OCI-LY7 (cell line): ENCODE measurements at regions of chr2 and their contacts with region 1.

Region 1: DNA sequence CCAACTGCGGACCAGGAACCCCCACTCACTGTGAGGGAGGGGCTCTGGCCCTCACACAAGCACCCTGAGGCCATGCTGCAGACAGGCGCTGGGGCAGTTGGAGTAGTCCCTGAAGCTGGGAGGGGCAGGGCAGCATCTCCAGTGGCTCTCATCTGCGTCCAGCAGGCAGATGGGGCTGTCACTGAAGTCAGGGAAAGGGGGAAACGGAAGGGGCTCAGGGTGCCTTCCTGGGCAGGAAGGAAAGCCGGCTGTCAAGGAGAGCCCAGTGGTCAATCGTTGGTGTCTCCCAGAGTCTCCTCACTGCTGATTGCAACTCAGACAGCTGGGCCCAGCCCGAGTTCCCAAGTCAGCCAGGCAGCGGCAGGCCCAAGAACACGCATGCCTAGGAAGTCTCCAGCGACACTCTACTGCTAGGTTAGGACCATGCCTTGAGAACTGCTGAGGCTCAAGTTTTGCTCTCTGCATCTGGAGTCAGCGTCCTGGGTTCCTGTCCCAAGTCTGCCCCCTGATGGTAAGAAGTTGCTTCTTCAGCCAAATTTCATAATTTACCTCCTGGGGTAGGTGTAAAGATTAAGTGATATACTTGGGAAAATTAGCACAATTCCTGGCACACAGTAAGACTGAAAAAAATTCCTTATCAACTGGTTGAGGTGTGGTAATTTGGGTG is 27.5 kb upstream of the NMUR1 start:
- DNase-seq: peak; percentile 88
- H3K4me3 ChIP-seq: no peak overlapping the region
- H3K27ac ChIP-seq: no peak overlapping the region
- H3K4me1 ChIP-seq: peaks cover 4% of the 10 kb centered on the region
- CTCF ChIP-seq: peak; percentile 91

Region 2: DNA sequence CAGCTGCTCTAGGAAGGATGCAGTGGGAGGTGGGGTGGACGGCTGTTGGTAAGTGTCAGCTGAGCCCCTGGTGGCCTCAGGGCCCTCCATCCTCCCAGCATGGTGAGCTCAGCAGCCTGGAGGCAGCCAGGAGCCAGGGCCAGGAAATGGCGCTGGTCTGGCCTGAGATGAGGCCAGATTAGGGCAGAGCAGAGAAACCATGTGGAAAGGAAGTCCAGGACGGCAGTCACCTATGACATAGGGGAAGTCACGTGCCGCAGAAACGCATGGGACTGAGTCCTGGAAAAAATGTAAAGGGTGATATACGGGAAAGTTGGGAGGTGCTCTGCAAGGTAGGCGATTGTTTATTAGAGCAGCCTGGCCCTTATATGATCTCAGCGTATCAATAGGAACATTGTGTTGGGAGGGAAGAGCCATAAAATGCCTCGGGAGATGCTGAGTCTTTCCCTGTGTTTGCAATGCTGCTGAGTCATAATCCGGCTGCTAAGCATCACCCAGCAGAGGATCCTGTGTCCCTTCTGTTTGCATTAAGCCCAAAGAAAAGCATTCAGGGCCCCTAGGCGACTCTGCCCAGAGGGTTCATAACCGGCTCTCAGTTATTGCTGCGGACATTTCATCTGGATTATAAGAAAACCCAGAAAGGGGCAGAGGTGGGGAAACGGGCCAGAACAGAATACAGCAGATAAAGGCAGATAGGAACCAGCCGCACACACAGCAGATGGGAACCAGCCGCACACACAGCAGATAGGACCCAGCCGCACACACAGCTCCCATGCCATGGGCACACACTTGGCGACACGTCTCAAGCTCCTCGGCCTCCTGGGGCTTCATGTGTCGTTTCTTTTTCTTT is 192.5 kb before region 1 on chr2:
- CTCF ChIA-PET with region 1: no interaction called
- POLR2A ChIA-PET with region 1: no interaction called
- intact Hi-C with region 1: no loop called
- DNase-seq: peak; percentile 13
- H3K4me3 ChIP-seq: no peak overlapping the region
- H3K27ac ChIP-seq: no peak overlapping the region
- H3K4me1 ChIP-seq: peaks cover 18% of the 10 kb centered on the region
- CTCF ChIP-seq: no peak

Region 3: GRCh38 chr2:231482806-231483391 is 74.8 kb before region 1 on chr2:
- CTCF ChIA-PET with region 1: no interaction called
- POLR2A ChIA-PET with region 1: no interaction called
- intact Hi-C with region 1: loop called (anchors 1 kb)
- DNase-seq: peak; percentile 60
- H3K4me3 ChIP-seq: no peak overlapping the region
- H3K27ac ChIP-seq: no peak overlapping the region
- H3K4me1 ChIP-seq: peaks cover 14% of the 10 kb centered on the region
- CTCF ChIP-seq: peak; percentile 84

Region 4: GRCh38 chr2:231494669-231495068 is 63.0 kb before region 1 on chr2:
- CTCF ChIA-PET with region 1: no interaction called
- POLR2A ChIA-PET with region 1: no interaction called
- intact Hi-C with region 1: no loop called
- DNase-seq: no peak
- H3K4me3 ChIP-seq: no peak overlapping the region
- H3K27ac ChIP-seq: no peak overlapping the region
- H3K4me1 ChIP-seq: no peaks in the 10 kb centered on the region
- CTCF ChIP-seq: no peak

Region 5: DNA sequence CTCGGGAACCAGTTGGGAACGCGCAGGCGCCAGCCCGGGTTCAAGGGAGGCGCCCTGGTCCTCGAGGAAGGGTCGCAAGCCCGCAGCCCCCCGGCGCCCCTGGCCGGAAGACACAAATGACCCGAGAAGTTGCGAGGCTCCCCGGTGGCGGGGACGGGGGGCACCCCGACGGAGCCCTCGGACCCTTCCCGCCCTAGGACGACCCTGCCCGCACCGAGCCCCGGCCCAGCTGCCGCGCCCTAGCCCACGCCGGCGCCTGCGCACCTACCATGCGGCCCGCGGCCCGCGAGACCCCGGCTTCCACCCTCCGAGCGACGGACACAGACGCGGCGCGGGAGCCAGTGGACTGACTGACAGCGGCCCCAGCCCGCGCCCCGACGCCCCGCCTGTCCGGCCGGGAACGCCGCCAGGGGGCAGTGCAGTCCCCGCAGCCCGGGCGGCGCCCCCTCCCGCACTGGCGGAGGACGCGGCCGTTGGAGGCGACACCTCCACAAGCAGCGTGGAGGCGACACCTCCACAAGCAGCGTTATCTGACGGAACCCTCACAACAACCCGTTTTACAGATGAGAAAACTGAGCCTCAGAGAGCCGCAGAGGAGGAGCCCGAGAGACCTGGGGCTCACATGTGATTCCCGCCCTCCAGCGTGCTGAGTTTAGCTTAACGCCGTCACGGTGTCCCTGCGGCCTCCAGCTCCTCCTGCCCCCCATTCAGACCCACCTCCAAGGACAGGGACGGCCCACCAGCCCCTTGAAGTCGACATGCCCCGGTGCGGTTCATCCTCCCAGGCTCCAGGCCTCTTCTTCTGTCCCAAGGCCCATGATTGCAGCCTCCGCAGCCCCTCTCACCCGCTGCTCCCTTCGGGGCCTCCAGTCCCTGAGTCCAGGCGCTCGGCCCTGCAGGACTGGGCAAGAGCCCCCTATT is 27.4 kb before region 1 on chr2 and contains the start of gene NMUR1:
- CTCF ChIA-PET with region 1: no interaction called
- POLR2A ChIA-PET with region 1: interaction called, 4 read pairs
- intact Hi-C with region 1: loop called (anchors 2 kb)
- DNase-seq: peak; percentile 45
- H3K4me3 ChIP-seq: no peak within 1 kb of the TSS
- H3K27ac ChIP-seq: no peak within 1 kb of the TSS
- H3K4me1 ChIP-seq: no peaks in the 10 kb centered on the region
- CTCF ChIP-seq: peak; percentile 85
- total RNA-seq, gene NMUR1: not detected in 2 replicates